Activated T-helper 1 cell treated with anti-CD3 and anti-CD28 coated beads, Interleukin-12 subunit alpha, Interleukin-12 subunit beta, Interleukin-2, Interleukin-4 antibody, amounts not matched to agents 30 ng/mL and 10 ng/mL and 1 ng/mL, durations not matched to agents 14 hours and 24 hours and 36 hours (primary cell): ENCODE measurements at regions of chr9 and their contacts with region 1.

Region 1: DNA sequence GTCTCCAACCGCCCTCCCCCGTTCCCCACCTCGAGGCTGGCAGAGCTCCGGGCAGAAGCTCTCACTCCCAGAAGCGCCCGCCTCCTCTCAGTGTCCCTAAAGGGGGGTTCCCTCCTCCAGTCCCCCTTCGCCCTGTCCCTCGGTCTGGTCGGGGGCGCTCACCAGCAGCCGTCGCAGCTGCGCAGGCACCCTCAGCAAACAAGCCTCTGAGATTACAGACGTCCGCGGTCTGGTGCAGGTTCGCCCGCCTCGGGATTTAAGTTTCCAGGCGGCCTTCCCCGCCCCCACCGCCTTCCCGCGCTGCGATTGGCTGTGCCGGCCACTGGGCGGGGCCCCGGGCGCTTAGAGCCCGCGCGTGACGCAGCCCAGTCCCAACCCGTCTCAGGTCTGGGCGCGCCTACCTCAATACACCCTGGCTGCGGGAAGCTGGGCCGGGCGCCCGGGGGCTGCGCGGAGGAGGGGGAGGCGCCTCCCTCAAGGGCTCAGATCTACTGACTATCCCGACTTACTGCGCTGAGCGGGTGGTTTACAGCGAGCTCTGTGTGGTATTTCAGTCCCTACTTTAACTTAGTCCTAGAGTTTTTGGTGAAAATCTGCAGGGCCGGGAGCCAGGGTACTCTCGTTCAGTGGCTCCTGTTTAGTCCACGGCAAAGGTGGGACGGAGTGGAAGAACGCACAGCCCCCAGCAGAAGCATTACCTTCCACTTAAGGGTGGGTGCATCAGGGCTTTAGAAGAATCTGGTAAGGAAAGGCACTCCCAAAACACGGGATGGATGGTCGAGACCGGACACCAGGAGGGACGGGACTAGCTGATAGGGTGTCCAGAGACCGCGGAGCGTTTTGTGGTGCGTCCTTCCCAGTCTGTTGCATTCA is at the start of gene CTSV:
- DNase-seq: peak; percentile 79
- H3K4me3 Mint-ChIP-seq: peak within 1 kb of the TSS; percentile 85
- H3K27ac Mint-ChIP-seq: no peak within 1 kb of the TSS
- H3K4me1 Mint-ChIP-seq: peaks cover 5% of the 10 kb centered on the region
- H3K27me3 Mint-ChIP-seq: peaks cover 45% of the 10 kb centered on the region
- total RNA-seq, gene CTSV: 0.24 and 0.31 TPM in 2 replicates

Region 2: GRCh38 chr9:97062417-97062985 is 23.4 kb after region 1 on chr9:
- intact Hi-C with region 1: loop called (anchors 1 kb)
- DNase-seq: no peak
- H3K4me3 Mint-ChIP-seq: no peak overlapping the region
- H3K27ac Mint-ChIP-seq: no peak overlapping the region
- H3K4me1 Mint-ChIP-seq: peaks cover 6% of the 10 kb centered on the region
- H3K27me3 Mint-ChIP-seq: no peaks in the 10 kb centered on the region

Region 3: GRCh38 chr9:97284798-97285197 is 245.7 kb after region 1 on chr9:
- intact Hi-C with region 1: no loop called
- DNase-seq: no peak
- H3K4me3 Mint-ChIP-seq: no peak overlapping the region
- H3K27ac Mint-ChIP-seq: no peak overlapping the region
- H3K4me1 Mint-ChIP-seq: no peaks in the 10 kb centered on the region
- H3K27me3 Mint-ChIP-seq: no peaks in the 10 kb centered on the region

Region 4: DNA sequence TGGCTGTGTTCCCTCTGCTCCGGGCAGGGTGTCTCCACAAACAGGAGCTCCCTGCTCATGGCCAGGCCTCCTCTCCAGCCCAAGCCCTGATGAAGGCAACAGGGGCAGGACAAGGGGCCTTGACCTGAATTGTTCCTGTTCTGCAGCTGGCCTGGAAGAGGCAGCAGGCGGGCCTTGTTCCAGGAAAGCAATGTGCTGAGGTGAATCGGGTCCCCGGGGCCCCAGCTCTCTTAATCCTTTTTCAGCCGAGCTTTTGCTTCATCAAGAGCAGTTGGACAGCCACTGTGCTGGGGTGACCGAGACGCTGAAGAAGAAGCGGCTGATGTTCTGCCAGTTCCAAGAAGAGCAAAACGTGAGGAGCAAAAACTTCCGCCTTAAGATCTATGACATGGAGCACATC is 309.7 kb after region 1 on chr9:
- intact Hi-C with region 1: no loop called
- DNase-seq: no peak
- H3K4me3 Mint-ChIP-seq: no peak overlapping the region
- H3K27ac Mint-ChIP-seq: no peak overlapping the region
- H3K4me1 Mint-ChIP-seq: no peaks in the 10 kb centered on the region
- H3K27me3 Mint-ChIP-seq: no peaks in the 10 kb centered on the region

Region 5: GRCh38 chr9:97689401-97689800 is 650.3 kb after region 1 on chr9:
- intact Hi-C with region 1: no loop called
- DNase-seq: no peak
- H3K4me3 Mint-ChIP-seq: no peak overlapping the region
- H3K27ac Mint-ChIP-seq: no peak overlapping the region
- H3K4me1 Mint-ChIP-seq: peaks cover 10% of the 10 kb centered on the region
- H3K27me3 Mint-ChIP-seq: no peaks in the 10 kb centered on the region